ENCODE measurements at regions of chr22 and their contacts with region 1.

Region 1: DNA sequence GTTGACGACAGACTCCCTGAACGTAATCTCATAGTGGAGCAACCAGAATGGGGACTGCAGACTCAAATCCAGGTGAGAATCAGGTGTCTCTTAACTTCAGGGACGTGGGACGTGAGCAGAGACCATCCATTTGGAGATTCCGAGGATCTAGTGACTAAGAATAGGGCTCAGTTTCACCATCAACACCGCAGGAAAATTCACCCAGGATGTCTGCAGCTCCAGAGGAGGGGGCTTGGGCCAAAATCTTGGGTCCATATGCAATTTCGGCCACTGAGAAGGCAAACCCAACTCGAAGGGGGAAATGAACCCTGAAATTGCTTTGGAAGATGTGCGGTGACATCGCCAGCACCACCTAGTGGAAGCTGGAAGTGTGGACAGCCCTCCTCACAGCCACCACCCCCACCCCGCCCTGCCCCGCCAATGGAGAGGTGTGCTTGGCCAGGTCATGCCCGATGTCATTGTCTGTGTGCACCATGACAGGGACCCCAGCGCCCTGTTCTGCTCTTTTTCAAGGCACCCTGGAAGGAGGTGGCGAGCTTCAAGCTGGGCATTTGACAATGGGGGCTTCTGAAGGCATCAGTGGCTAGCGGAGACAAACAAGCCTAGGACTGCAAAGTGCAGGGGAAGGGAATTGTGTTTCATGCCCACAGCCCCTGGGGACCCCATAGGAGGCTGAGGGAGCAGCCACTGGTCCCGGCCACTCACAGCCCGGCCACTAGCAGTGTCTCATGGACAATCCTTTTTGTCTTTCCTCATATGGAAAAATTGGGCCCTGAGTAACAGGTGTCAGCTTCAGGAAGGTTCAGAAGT is 24.8 kb downstream of the APOL1 start:
- DNase-seq: no peak
- ATAC-seq: peak; percentile 93
- H3K4me3 ChIP-seq: no peak overlapping the region
- H3K27ac ChIP-seq: no peak overlapping the region
- H3K4me1 ChIP-seq: peaks cover 6% of the 10 kb centered on the region
- H3K27me3 ChIP-seq: no peaks in the 10 kb centered on the region
- CTCF ChIP-seq: peak; percentile 79 to 85 (median 83)
- EP300 ChIP-seq: no peak
- POLR2A ChIP-seq: no peak
- RAD21 ChIP-seq: peak; percentile 64

Region 2: GRCh38 chr22:36252754-36253517 is 24.8 kb before region 1 on chr22 and contains the start of gene APOL1:
- CTCF ChIA-PET with region 1: interaction called, 15 read pairs
- POLR2A ChIA-PET with region 1: no interaction called
- RAD21 ChIA-PET with region 1: interaction called, 6 read pairs
- SMC1A ChIA-PET with region 1: interaction called, 4 read pairs
- in situ Hi-C with region 1: no loop called
- intact Hi-C with region 1: no loop called
- DNase-seq: peak; percentile 62
- ATAC-seq: peak; percentile 83
- H3K4me3 ChIP-seq: peak within 1 kb of the TSS; percentile 91
- H3K27ac ChIP-seq: peak within 1 kb of the TSS; percentile 80
- H3K4me1 ChIP-seq: peaks cover 38% of the 10 kb centered on the region
- H3K27me3 ChIP-seq: no peaks in the 10 kb centered on the region
- CTCF ChIP-seq: no peak
- EP300 ChIP-seq: no peak
- POLR2A ChIP-seq: 0 out of 2 replicates have a peak, but pooled peaks have one; percentile 49
- RAD21 ChIP-seq: no peak
- polyA plus RNA-seq, gene APOL1: 9.0 to 10.7 TPM

Region 3: GRCh38 chr22:36317658-36318271 is 40.1 kb after region 1 on chr22:
- CTCF ChIA-PET with region 1: no interaction called
- POLR2A ChIA-PET with region 1: no interaction called
- RAD21 ChIA-PET with region 1: no interaction called
- SMC1A ChIA-PET with region 1: no interaction called
- in situ Hi-C with region 1: no loop called
- intact Hi-C with region 1: no loop called
- DNase-seq: no peak
- ATAC-seq: no peak
- H3K4me3 ChIP-seq: no peak overlapping the region
- H3K27ac ChIP-seq: no peak overlapping the region
- H3K4me1 ChIP-seq: no peaks in the 10 kb centered on the region
- H3K27me3 ChIP-seq: no peaks in the 10 kb centered on the region
- CTCF ChIP-seq: no peak
- EP300 ChIP-seq: no peak
- POLR2A ChIP-seq: 0 out of 2 replicates have a peak, but pooled peaks have one; percentile 7
- RAD21 ChIP-seq: no peak